ENCODE measurements at regions of chr17 and their contacts with region 1.

Region 1: GRCh38 chr17:74961657-74962490 is 10.7 kb downstream of the HID1 start:
- DNase-seq: peak; percentile 96
- H3K4me3 ChIP-seq: no peak overlapping the region
- H3K27ac ChIP-seq: no peak overlapping the region; a peak in 1 of 4 replicates
- H3K4me1 ChIP-seq: no peaks in the 10 kb centered on the region; a peak in 1 of 4 replicates
- H3K27me3 ChIP-seq: no peaks in the 10 kb centered on the region
- CTCF ChIP-seq: peak; percentile 91
- EP300 ChIP-seq: no peak
- RAD21 ChIP-seq: peak; percentile 95

Region 2: GRCh38 chr17:74513987-74514631 is 447.8 kb before region 1 on chr17:
- CTCF ChIA-PET with region 1: no interaction called
- POLR2A ChIA-PET with region 1: no interaction called
- DNase-seq: no peak
- H3K4me3 ChIP-seq: no peak overlapping the region
- H3K27ac ChIP-seq: no peak overlapping the region
- H3K4me1 ChIP-seq: no peaks in the 10 kb centered on the region
- H3K27me3 ChIP-seq: no peaks in the 10 kb centered on the region
- CTCF ChIP-seq: no peak
- EP300 ChIP-seq: no peak
- RAD21 ChIP-seq: no peak

Region 3: DNA sequence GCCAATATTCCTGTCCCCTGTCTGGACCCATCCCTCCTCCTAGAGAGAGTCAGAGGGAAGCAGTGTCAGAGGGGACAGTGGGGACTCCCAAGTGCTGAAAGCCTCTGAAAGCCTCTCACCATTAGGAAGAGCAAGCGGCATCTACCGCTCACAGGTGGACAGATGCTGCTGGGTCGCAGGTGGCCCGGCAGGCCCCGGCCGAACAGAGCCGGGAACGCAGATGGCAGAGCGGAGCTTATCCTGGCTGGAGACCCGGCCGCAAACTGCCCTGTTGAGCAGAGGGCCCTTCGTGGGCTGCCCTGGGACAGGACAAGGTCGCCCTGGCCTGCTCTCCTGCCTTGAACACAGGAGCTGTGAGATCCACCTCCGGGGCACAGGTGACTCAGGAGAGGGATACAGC is 162.8 kb before region 1 on chr17:
- CTCF ChIA-PET with region 1: no interaction called
- POLR2A ChIA-PET with region 1: no interaction called
- DNase-seq: no peak
- H3K4me3 ChIP-seq: no peak overlapping the region
- H3K27ac ChIP-seq: peak overlapping the region; percentile 56 to 82
- H3K4me1 ChIP-seq: peaks cover 23 to 36% of the 10 kb centered on the region in 2 experiments
- H3K27me3 ChIP-seq: no peaks in the 10 kb centered on the region
- CTCF ChIP-seq: no peak
- EP300 ChIP-seq: no peak
- RAD21 ChIP-seq: no peak

Region 4: DNA sequence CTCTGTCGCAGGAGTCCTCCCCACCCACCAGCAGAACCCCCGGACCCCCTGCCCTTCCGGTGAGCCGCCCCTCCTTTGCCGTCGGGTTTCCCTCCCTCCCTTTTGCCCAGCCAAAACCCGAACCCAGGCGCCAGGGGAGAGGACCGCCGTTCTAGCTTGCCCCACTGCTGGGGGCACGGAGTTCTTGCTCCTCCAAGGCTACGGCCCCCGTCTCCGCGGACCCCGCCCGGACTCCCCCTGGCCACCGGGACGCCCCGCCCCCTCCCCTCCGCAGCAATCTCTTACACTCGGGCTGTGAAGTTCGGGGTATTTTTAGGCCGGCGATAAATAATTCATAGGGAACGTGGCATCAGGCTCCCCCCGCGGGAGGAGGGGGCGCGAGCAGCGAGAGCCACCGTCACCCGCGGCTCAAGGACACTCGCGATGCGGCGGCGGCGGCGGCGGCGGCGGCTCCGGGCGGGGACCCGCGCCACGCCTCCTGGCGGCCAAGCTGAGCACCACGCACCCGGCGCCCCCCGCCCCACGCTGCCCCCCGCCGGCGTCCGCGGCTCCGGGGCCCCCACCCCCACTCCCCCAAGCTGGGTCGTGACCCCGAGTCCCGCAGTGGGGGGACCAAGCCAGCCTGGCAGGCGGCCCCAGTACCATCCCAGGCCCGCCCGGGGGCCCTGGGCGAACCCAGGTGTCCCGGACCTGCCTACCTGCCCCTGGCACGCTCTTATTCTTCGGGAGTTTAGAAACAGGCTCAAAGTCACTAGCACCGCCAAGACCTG is 102.2 kb before region 1 on chr17 and contains the start of gene GRIN2C:
- CTCF ChIA-PET with region 1: interaction called, 20 read pairs
- POLR2A ChIA-PET with region 1: no interaction called
- DNase-seq: peak; percentile 93
- H3K4me3 ChIP-seq: peak within 1 kb of the TSS; percentile 45 to 55
- H3K27ac ChIP-seq: no peak within 1 kb of the TSS
- H3K4me1 ChIP-seq: peaks cover 0 to 10% of the 10 kb centered on the region in 2 experiments; a peak in 2 of 4 replicates
- H3K27me3 ChIP-seq: peaks cover 46% of the 10 kb centered on the region
- CTCF ChIP-seq: peak; percentile 54
- EP300 ChIP-seq: no peak; a peak in 1 of 4 replicates
- RAD21 ChIP-seq: no peak
- polyA plus RNA-seq, gene GRIN2C: 0.39 and 0.45 TPM in 2 replicates

Region 5: GRCh38 chr17:74935585-74936469 is 26.0 kb before region 1 on chr17 and contains the start of gene OTOP3:
- CTCF ChIA-PET with region 1: interaction called, 49 read pairs
- POLR2A ChIA-PET with region 1: no interaction called
- DNase-seq: peak; percentile 81
- H3K4me3 ChIP-seq: no peak within 1 kb of the TSS; a peak in 1 of 4 replicates
- H3K27ac ChIP-seq: no peak within 1 kb of the TSS
- H3K4me1 ChIP-seq: no peaks in the 10 kb centered on the region; a peak in 1 of 4 replicates
- H3K27me3 ChIP-seq: peaks cover 76% of the 10 kb centered on the region
- CTCF ChIP-seq: no peak
- EP300 ChIP-seq: no peak
- RAD21 ChIP-seq: no peak
- polyA plus RNA-seq, gene OTOP3: not detected in 2 replicates

Region 6: GRCh38 chr17:74987418-74987908 is 25.6 kb after region 1 on chr17 and contains the start of gene CDR2L:
- CTCF ChIA-PET with region 1: interaction called, 80 read pairs
- POLR2A ChIA-PET with region 1: interaction called, 7 read pairs
- DNase-seq: peak; percentile 98
- H3K4me3 ChIP-seq: peak within 1 kb of the TSS; percentile 80 to 93
- H3K27ac ChIP-seq: peak within 1 kb of the TSS; percentile 92
- H3K4me1 ChIP-seq: peaks cover 6 to 35% of the 10 kb centered on the region in 2 experiments; a peak in 2 of 4 replicates
- H3K27me3 ChIP-seq: no peaks in the 10 kb centered on the region
- CTCF ChIP-seq: no peak
- EP300 ChIP-seq: no peak; a peak in 1 of 4 replicates
- RAD21 ChIP-seq: no peak
- polyA plus RNA-seq, gene CDR2L: 18.6 and 21.2 TPM in 2 replicates

Region 7: DNA sequence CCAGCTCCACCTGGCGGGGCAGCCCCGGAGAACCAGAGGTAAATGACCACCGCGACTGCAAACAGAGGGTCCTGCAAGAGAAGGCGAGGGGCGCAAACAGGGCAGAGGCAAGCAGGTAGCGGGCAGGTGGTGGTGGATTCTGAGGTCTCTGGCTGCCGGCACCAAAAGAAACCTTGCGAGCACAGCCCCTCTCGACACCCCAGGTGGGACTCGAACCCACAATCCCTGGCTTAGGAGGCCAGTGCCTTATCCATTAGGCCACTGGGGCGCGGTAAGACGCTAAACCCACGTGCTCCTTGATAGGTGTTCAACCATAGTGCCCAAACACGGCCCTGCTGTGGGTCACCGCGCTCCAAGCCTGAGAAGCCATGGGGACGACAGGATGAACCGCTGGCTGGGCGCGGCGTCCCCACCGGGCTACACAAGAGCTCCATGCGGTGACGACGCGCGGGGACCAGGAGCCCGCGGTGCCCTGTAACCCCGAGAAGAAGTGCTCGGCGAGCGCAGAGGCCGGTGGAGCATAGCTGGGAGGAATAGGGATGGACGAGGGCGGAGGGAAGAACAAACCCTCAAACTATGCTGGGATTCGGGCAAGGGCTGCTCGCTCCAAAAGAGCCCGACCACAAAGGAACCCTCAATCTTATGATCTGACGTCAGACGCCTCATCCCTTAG is 72.5 kb after region 1 on chr17:
- CTCF ChIA-PET with region 1: interaction called, 31 read pairs
- POLR2A ChIA-PET with region 1: interaction called, 6 read pairs
- DNase-seq: peak; percentile 81
- H3K4me3 ChIP-seq: peak overlapping the region; percentile 67 to 98
- H3K27ac ChIP-seq: peak overlapping the region; percentile 90 to 92
- H3K4me1 ChIP-seq: peaks cover 0 to 22% of the 10 kb centered on the region in 2 experiments; a peak in 1 of 4 replicates
- H3K27me3 ChIP-seq: no peaks in the 10 kb centered on the region
- CTCF ChIP-seq: peak; percentile 49
- EP300 ChIP-seq: peak in 1 of 2 experiments; percentile 12; a peak in 1 of 4 replicates
- RAD21 ChIP-seq: no peak

Region 8: DNA sequence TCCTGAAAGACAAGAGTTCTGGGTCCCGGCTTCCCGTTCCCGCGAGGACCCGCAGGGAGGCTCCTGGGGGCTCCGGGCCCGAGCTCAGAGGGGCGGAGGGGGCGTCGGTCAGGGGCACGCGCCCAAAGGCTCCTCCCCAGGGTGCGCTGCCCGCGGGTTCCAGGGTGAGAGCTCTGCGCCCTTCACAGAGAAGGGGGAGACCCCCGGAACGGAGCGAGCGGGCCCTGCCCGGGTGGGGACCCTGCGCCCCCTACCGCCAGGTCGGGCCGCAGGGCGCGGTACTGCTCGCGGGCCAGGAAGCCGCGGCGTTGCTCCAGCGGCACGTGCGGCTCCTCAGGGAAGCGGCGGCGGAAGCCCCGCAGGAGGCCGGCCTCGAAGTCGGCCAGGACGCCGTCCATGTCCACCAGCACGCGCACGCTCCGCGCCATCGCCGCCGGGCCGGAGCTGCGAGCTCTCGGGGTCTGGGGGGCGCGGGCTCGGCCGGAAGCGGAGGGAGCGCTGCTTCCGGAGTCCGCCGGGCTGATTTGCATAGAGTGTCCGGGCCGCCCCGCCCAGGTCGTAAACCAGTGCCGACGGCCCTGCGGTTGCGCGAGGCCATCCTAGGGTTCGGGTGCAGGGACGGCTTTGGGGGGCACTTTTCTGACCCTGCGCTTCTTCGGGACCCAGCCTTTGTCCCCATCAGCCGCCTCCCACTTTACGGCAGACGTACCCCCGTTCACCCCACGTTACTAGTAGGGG is 169.6 kb after region 1 on chr17 and contains the start of gene NT5C:
- CTCF ChIA-PET with region 1: interaction called, 12 read pairs
- POLR2A ChIA-PET with region 1: interaction called, 5 read pairs
- DNase-seq: peak; percentile 97
- H3K4me3 ChIP-seq: peak within 1 kb of the TSS; percentile 64 to 88
- H3K27ac ChIP-seq: peak within 1 kb of the TSS; percentile 78 to 90
- H3K4me1 ChIP-seq: peaks cover 5 to 16% of the 10 kb centered on the region in 2 experiments; a peak in 2 of 4 replicates
- H3K27me3 ChIP-seq: no peaks in the 10 kb centered on the region
- CTCF ChIP-seq: peak; percentile 74
- EP300 ChIP-seq: no peak
- RAD21 ChIP-seq: 0 out of 2 replicates have a peak, but pooled peaks have one; percentile 16
- polyA plus RNA-seq, gene NT5C: 111 and 114 TPM in 2 replicates

Region 9: DNA sequence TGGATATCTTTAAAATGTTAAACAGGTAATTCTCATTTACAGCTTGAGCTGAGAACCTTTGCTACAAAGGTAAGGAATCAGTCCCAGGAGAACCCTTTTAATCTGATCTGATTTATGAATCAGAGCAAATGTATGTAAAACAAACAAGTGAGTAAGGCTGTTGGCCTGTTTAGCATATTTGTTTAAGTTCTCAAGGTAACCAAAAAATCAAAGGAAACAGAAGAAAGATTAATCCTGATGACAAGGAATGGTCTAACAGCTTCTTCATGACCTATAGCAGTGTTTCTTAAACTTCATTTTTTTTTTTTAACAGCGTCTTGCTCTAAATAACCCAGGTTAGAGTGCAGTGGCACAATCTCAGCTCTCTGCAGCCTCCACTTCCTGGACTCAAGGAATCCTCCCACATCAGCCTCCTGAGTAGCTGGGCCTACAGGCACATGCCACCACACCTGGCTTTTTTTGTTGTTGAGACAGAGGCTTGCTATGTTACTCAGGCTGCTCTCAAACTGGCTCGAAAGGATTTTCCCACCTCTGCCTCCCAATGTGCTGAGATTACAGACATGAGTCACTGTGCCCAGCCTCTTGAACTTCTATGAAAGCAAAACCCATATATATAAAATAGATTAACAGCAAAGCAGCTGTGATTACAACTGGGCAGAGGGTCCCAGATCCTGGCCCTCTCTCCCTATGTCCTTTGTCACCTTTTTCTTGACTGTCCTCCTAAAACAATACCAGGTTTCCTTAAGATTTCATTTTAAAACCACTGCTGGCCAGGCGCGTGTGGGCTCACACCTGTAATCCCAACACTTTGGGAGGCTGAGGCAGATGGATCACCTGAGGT is 197.5 kb after region 1 on chr17:
- CTCF ChIA-PET with region 1: no interaction called
- POLR2A ChIA-PET with region 1: no interaction called
- DNase-seq: no peak
- H3K4me3 ChIP-seq: no peak overlapping the region
- H3K27ac ChIP-seq: peak overlapping the region in 1 of 2 experiments; percentile 55; a peak in 2 of 4 replicates
- H3K4me1 ChIP-seq: peaks cover 5 to 8% of the 10 kb centered on the region in 2 experiments; a peak in 3 of 4 replicates
- H3K27me3 ChIP-seq: no peaks in the 10 kb centered on the region
- CTCF ChIP-seq: no peak
- EP300 ChIP-seq: no peak
- RAD21 ChIP-seq: no peak

Region 10: GRCh38 chr17:75181608-75182318 is 219.9 kb after region 1 on chr17:
- CTCF ChIA-PET with region 1: no interaction called
- POLR2A ChIA-PET with region 1: no interaction called
- DNase-seq: peak; percentile 36
- H3K4me3 ChIP-seq: peak overlapping the region; percentile 67 to 93
- H3K27ac ChIP-seq: peak overlapping the region; percentile 90 to 99
- H3K4me1 ChIP-seq: peaks cover 3 to 6% of the 10 kb centered on the region in 2 experiments; a peak in 2 of 4 replicates
- H3K27me3 ChIP-seq: no peaks in the 10 kb centered on the region
- CTCF ChIP-seq: no peak
- EP300 ChIP-seq: no peak
- RAD21 ChIP-seq: no peak

Measured in SK-N-SH (cell line).